ENCODE measurements at regions of chr5 and their contacts with region 1.

Region 1: DNA sequence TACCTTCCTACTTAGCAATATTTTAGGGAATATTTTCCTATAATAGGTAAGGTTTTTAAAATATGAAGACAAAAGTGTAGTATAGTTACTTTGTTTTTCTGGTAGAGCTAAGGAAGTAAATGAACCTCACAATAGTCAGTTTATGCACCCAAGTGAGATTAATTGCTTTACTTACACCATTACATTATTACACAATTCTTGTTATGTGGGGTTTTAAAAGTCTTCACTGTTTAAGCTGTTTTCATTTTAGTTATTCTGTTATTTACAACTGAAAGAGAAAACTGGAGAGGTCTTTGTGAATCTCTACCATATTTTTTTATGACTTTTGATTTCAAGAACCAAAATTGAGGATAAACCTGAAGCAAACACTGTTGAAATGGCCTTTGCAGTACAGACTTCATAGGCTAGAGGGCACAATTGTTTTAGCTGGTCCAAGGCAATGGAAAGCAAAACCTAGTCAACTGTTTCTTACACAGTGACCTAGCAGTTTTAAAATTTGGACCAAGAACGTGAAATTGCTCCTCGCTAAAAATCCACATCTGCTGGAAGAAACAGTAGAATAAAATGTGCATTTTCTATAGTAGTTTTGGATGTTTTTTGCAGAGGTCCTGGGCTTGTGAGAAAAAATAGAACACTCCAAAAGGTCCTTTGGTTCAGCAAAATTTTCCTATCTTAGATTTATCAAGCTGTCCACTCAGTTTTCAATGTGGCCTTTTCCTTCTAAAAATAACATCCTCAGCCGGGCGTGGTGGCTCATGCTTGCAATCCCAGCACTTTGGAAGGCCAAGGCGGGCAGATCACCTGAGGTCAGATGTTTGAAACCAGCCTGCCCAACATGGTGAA is 66.4 kb upstream of the FER start:
- DNase-seq: peak; percentile 26 to 81 (median 48)
- ATAC-seq: peak; percentile 94
- H3K4me3 ChIP-seq: no peak overlapping the region
- H3K27ac ChIP-seq: 0 out of 3 replicates have a peak overlapping the region, but pooled peaks have one; percentile 43
- H3K4me1 ChIP-seq: peaks cover 0 to 6% of the 10 kb centered on the region in 2 experiments; a peak in 2 of 5 replicates
- H3K27me3 ChIP-seq: no peaks in the 10 kb centered on the region; a peak in 1 of 5 replicates
- CTCF ChIP-seq: peak; percentile 68 to 91 (median 83)
- EP300 ChIP-seq: no peak
- POLR2A ChIP-seq: no peak
- RAD21 ChIP-seq: peak; percentile 95 to 98

Region 2: DNA sequence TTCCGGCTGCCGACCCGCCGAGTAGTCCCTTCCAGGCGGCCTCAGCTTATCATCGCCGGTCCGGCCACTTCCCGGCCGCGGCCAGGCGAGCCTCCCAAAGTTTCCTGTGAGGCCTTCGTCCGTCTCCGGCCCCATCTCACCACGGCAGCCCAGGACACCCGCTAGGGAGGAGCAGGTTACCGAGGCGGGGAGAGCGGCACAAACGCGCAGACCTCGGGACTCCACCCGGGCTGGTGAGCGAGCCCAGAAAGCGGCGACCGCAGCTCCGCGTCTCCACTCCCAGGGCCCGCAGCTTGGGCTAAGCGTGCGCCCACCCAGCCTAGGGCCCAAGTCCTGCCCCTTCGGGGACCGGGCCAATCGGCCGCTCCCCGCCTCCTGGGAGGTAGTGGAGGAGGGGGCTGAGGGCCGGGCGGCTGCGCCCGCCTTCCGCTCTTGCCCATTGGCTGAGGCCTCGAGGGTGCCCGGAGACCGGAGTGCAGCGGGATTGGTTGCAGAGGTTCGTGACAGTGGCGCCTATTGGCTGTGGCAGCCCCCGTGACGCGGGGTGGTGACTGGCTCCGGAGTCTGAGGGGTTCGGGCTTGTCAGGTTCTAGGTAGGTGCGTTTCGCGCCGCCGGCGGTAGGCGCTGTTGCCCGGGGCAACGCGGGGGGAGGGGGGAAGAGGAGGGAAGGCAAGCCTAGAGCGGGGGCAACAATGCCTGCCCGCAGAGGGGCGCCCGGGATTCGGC is 67.3 kb after region 1 on chr5:
- CTCF ChIA-PET with region 1: no interaction called
- POLR2A ChIA-PET with region 1: no interaction called
- in situ Hi-C with region 1: no loop called
- intact Hi-C with region 1: loop called (anchors 2 kb)
- DNase-seq: peak; percentile 96 to 99 (median 98)
- ATAC-seq: peak; percentile 97
- H3K4me3 ChIP-seq: peak overlapping the region; percentile 67
- H3K27ac ChIP-seq: peak overlapping the region; percentile 89
- H3K4me1 ChIP-seq: peaks cover 0 to 12% of the 10 kb centered on the region in 2 experiments; a peak in 1 of 5 replicates
- H3K27me3 ChIP-seq: no peaks in the 10 kb centered on the region
- CTCF ChIP-seq: peak in 1 of 3 experiments; percentile 38; a peak in 2 of 6 replicates
- EP300 ChIP-seq: no peak
- POLR2A ChIP-seq: peak; percentile 99
- RAD21 ChIP-seq: peak in 1 of 2 experiments; percentile 15; a peak in 2 of 4 replicates

Region 3: GRCh38 chr5:108822211-108822947 is 141.1 kb after region 1 on chr5:
- CTCF ChIA-PET with region 1: no interaction called
- POLR2A ChIA-PET with region 1: no interaction called
- in situ Hi-C with region 1: no loop called
- intact Hi-C with region 1: loop called (anchors 10 kb)
- DNase-seq: no peak
- ATAC-seq: no peak
- H3K4me3 ChIP-seq: no peak overlapping the region
- H3K27ac ChIP-seq: no peak overlapping the region
- H3K4me1 ChIP-seq: no peaks in the 10 kb centered on the region
- H3K27me3 ChIP-seq: no peaks in the 10 kb centered on the region
- CTCF ChIP-seq: no peak
- EP300 ChIP-seq: no peak
- POLR2A ChIP-seq: no peak
- RAD21 ChIP-seq: no peak

Region 4: GRCh38 chr5:109468737-109469420 is 787.6 kb after region 1 on chr5:
- CTCF ChIA-PET with region 1: no interaction called
- POLR2A ChIA-PET with region 1: no interaction called
- in situ Hi-C with region 1: loop called (anchors 10 kb)
- intact Hi-C with region 1: loop called (anchors 2 kb)
- DNase-seq: peak; percentile 84 to 95 (median 88)
- ATAC-seq: peak; percentile 99
- H3K4me3 ChIP-seq: no peak overlapping the region
- H3K27ac ChIP-seq: no peak overlapping the region
- H3K4me1 ChIP-seq: peaks cover 0 to 5% of the 10 kb centered on the region in 2 experiments; a peak in 1 of 5 replicates
- H3K27me3 ChIP-seq: peaks cover 0 to 4% of the 10 kb centered on the region in 2 experiments; a peak in 1 of 5 replicates
- CTCF ChIP-seq: peak; percentile 71 to 93 (median 81)
- EP300 ChIP-seq: 0 out of 2 replicates have a peak, but pooled peaks have one; percentile 32
- POLR2A ChIP-seq: no peak
- RAD21 ChIP-seq: peak; percentile 68 to 86

Measured in K562 (cell line).